Activated CD4-positive, alpha-beta memory T cell treated with anti-CD3 and anti-CD28 coated beads, Interleukin-2, amount 10 ng/mL, durations not matched to agents 7 days and 5 days (primary cell): ENCODE measurements at regions of chr1 and their contacts with region 1.

Region 1: DNA sequence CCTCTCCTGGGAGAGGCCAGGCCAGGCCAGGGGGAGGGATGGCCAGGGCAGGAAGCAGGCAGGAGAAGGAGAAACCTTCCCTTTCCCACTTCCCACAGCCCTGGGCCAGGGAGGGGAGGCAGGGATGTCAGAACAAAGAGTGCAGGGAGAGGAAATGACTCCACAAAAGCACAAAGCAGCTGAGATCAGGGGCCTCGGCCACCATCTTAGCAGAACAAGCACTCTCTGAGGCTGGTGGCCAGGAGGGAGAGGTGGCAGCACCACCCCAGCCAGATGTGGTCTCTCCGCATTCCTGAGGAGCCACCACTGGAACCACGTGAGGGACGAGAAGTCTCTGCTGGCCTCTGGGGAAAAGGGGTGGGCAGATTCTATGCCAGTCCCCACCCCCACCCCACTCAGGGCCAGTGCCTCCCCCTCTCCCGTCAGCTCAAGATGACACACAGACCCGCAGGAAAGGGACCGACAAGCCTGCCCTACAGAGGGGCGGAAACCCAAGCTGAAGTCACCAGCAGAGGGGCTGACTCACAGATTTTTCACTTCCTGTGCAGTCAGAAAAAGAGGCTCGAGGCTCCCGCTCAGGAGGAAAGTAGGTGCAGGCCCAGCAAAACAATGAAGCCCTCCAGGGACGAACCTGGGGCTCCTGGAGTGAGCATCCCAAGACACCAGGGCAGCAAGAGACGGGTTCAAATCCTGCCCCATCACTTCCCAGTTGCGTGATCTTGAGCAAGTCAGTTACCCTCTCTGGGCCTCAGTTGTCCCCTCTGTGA is 24.1 kb upstream of the ALDH4A1 start:
- DNase-seq: peak; percentile 91
- H3K4me3 Mint-ChIP-seq: peak overlapping the region; percentile 76
- H3K27ac Mint-ChIP-seq: peak overlapping the region; percentile 99
- H3K4me1 Mint-ChIP-seq: peaks cover 70% of the 10 kb centered on the region
- H3K27me3 Mint-ChIP-seq: no peaks in the 10 kb centered on the region

Region 2: DNA sequence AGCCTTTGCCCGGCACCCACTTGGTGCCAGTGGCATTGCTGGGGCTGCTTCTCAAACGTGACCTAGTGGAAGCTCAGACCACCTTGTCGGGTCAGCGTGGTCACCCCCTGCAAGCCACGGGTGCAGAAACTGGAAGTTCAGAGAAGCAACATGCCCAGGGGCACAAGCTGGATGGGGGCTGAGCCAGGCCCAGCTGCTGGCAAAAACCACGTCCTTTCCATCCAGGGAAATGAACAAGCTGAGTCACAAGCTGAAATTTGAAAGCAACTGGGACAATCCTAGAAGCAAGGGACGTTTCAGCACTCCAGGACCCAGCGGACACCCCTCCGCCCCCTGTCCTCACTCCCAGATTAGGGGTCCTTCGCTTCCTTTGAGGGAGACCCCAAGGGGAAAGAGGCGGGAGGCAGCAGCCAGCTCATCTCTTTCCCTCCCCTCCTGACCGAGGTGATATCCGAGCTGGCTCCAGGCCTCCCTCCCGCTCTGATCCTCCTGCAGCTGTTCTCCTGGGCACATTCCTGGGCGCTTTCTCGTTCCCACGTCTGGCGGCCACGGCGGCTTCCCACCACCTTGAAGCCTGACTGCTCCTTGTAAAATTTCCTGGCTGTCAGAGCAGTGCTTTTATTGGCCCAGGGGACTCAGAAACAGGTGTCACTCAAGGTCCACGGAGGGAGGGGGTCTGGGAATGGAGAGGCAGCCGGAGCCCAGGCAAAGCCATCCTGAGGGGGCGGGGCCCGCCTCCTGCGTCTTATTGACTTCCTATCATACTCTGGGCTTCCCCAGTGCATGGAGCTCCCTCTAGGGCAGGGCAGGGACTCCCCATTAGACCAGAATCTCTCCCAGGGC is 233.0 kb before region 1 on chr1:
- CTCF ChIA-PET with region 1: no interaction called
- POLR2A ChIA-PET with region 1: no interaction called
- DNase-seq: no peak
- H3K4me3 Mint-ChIP-seq: no peak overlapping the region
- H3K27ac Mint-ChIP-seq: no peak overlapping the region
- H3K4me1 Mint-ChIP-seq: no peaks in the 10 kb centered on the region
- H3K27me3 Mint-ChIP-seq: peaks cover 13% of the 10 kb centered on the region

Region 3: GRCh38 chr1:18902523-18903290 is 23.8 kb before region 1 on chr1 and contains the start of gene ALDH4A1:
- CTCF ChIA-PET with region 1: interaction called, 26 read pairs
- POLR2A ChIA-PET with region 1: interaction called, 26 read pairs
- DNase-seq: peak; percentile 96
- H3K4me3 Mint-ChIP-seq: peak within 1 kb of the TSS; percentile 80
- H3K27ac Mint-ChIP-seq: peak within 1 kb of the TSS; percentile 86
- H3K4me1 Mint-ChIP-seq: peaks cover 33% of the 10 kb centered on the region
- H3K27me3 Mint-ChIP-seq: no peaks in the 10 kb centered on the region
- total RNA-seq, gene ALDH4A1: 3.3 to 3.7 TPM

Region 4: DNA sequence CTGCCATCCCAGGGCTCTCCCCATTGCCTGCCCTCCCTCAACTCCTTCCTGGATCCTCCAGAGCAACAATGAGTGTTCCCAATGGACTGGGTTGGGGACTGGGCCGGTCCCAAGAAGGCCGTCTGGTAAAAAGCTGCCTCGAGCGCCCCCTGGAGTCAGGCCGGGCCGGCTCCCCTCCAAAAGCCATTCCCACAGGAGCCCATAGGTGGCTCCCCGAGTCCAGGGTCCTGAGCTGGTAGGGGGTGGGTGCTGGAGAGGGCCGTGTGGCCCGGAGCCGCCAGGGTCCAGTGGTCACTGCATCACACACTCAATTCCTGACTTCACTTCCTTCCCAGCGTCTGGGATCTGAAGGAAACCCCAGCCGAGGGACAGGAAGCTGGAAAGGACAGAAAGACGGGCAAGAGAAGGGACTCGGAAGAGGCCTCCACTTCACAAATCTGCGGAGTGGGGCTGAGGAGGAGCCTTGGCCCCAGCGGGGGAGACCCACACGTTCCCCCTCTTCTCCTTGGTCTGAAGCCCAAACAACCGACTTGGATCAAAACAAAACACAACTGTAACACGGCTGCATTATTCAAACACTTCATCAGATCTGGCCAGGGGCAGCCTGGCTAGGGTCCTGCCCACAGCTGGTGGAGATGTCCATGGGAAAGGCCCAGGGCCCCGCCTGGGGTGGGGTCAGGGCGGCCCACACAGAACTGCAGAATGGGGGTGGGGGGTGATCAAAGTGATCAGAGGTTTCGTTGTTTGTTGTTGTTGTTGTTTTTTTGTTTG is 13.2 kb before region 1 on chr1:
- CTCF ChIA-PET with region 1: interaction called, 89 read pairs
- POLR2A ChIA-PET with region 1: interaction called, 21 read pairs
- DNase-seq: peak; percentile 74
- H3K4me3 Mint-ChIP-seq: no peak overlapping the region
- H3K27ac Mint-ChIP-seq: peak overlapping the region; percentile 44
- H3K4me1 Mint-ChIP-seq: peaks cover 5% of the 10 kb centered on the region
- H3K27me3 Mint-ChIP-seq: no peaks in the 10 kb centered on the region

Region 5: DNA sequence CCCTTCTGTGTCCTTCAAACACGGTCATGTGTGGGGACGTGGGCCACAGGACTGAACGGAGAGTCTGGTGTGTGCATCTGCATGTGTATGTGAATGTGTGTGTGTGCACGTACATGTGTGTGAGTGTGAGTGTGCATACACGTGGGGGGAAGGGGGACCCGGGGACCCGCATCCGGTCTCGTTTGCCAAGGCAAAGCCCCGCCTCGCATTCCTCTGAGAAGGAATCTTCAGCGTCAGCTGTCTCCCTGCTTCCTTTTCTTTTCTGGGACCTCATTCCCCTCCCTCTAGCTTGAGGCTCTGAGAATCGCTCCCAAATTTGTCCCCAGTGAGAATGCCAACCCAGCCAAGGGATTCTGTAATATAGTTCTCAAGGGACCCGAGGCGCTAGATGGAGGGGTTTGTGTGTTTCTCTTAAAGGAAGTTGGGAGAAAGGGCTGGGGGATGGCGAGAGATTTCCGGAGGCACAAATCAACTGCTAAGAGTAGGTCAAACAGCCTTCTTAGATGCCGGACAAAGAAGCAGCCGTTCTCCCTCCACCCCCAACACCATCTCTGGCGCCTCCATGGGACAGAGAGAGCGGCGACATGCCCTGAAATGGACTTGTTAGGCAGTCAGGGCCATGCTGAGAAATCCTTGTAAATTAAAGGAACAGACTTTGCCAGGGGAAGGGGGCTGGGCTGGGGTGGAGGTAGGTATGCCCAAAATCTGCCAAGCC is 23.3 kb after region 1 on chr1:
- CTCF ChIA-PET with region 1: interaction called, 38 read pairs
- POLR2A ChIA-PET with region 1: interaction called, 414 read pairs
- DNase-seq: peak; percentile 37
- H3K4me3 Mint-ChIP-seq: peak overlapping the region; percentile 82
- H3K27ac Mint-ChIP-seq: peak overlapping the region; percentile 95
- H3K4me1 Mint-ChIP-seq: peaks cover 94% of the 10 kb centered on the region
- H3K27me3 Mint-ChIP-seq: peaks cover 4% of the 10 kb centered on the region

Region 6: DNA sequence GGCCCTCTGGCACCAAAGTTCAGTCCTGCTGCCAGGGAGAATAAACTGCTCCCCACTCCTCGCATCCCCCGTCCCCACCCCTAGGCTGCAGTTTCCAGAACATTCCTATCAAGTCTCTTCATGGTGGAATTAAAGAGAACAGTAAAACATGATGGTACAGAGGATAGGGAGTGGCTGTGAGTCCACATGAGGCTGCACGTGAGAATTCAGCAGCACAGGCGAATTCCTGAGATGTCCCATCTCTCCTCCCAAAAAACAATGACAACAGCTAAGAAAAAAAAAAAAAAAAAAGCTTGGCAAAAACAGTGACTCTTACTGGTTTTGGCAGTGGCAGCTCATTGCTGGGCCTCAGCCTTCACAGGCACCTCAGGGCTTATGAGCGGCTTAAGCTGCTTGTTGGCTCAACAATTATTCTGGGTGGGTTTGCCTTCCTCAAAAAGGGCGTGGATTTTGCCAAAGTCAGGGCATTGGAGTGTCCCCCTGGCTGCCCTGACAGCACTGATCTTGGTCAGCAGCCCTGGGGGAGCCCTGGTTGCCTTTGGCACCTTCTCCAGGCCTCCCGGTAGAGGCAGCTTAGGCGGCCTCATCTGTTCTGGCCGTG is 35.7 kb after region 1 on chr1:
- CTCF ChIA-PET with region 1: no interaction called
- POLR2A ChIA-PET with region 1: interaction called, 414 read pairs
- DNase-seq: no peak
- H3K4me3 Mint-ChIP-seq: no peak overlapping the region
- H3K27ac Mint-ChIP-seq: no peak overlapping the region
- H3K4me1 Mint-ChIP-seq: peaks cover 20% of the 10 kb centered on the region
- H3K27me3 Mint-ChIP-seq: peaks cover 46% of the 10 kb centered on the region

Region 7: GRCh38 chr1:18978706-18979105 is 52.2 kb after region 1 on chr1:
- CTCF ChIA-PET with region 1: no interaction called
- POLR2A ChIA-PET with region 1: no interaction called
- DNase-seq: no peak
- H3K4me3 Mint-ChIP-seq: no peak overlapping the region
- H3K27ac Mint-ChIP-seq: no peak overlapping the region
- H3K4me1 Mint-ChIP-seq: no peaks in the 10 kb centered on the region
- H3K27me3 Mint-ChIP-seq: peaks cover 43% of the 10 kb centered on the region

Region 8: GRCh38 chr1:19074902-19075721 is 148.6 kb after region 1 on chr1:
- CTCF ChIA-PET with region 1: interaction called, 3 read pairs
- POLR2A ChIA-PET with region 1: interaction called, 22 read pairs
- DNase-seq: no peak
- H3K4me3 Mint-ChIP-seq: no peak overlapping the region
- H3K27ac Mint-ChIP-seq: peak overlapping the region; percentile 71
- H3K4me1 Mint-ChIP-seq: peaks cover 34% of the 10 kb centered on the region
- H3K27me3 Mint-ChIP-seq: no peaks in the 10 kb centered on the region